A549 (cell line): ENCODE measurements at regions of chr15 and their contacts with region 1.

Region 1: DNA sequence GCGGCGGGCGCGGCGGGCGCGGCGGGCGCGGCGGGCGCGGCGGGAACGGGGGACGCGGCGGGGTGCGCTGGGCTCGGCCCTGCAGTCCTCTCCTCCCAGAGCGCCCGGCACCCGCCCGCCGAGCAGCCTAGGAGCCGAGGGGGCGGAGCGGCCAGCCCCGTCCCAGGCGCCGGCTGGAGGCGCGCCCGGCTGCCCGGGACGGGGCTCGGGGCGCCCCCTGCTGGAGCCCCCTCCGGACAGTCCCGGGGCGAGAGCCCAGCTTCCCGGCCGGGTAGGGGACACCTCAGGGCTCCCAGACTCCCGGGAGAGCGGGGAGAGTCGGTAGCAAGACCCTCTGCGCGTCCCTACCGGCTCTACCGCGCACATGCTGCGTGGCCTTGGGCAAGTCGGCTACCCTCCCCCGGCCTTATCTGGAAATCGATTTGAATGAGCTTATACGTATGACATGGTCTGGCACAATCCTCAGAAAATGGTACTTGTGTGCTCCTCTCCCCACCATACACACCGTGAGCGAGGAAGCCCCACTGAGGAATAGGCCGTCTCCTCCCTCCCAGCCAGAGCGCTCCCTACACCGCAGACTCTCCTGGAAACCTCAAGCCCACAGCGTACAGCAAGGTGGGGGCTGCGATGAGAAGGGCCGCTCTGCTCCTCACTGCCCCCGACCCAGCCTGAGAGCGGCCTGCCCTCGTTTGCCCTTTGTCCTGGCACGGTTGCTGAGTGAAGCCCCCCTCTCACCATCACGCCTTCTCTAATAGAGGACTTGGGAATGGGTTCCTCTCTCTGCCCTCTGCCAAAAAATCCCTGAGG is at the start of gene DAPK2:
- DNase-seq: peak; percentile 66 to 98
- ATAC-seq: peak; percentile 83 to 91
- H3K4me3 ChIP-seq: peak within 1 kb of the TSS; percentile 64
- H3K27ac ChIP-seq: peak within 1 kb of the TSS; percentile 73 to 94
- H3K4me1 ChIP-seq: peaks cover 33% of the 10 kb centered on the region
- CTCF ChIP-seq: peak; percentile 99
- EP300 ChIP-seq: no peak
- POLR2A ChIP-seq: peak; percentile 37; the same call in 1 of the 2 replicates
- RAD21 ChIP-seq: peak; percentile 63 to 95
- polyA plus RNA-seq, gene DAPK2: 4.2 and 4.8 TPM in 2 replicates

Region 2: GRCh38 chr15:63610200-63610841 is 436.2 kb before region 1 on chr15:
- CTCF ChIA-PET with region 1: interaction called, 29 read pairs
- POLR2A ChIA-PET with region 1: no interaction called
- DNase-seq: peak; percentile 85 to 93
- ATAC-seq: peak; percentile 92 to 96
- H3K4me3 ChIP-seq: no peak overlapping the region
- H3K27ac ChIP-seq: peak overlapping the region; percentile 18 to 21; a peak in 3 of 6 replicates
- H3K4me1 ChIP-seq: peaks cover 17% of the 10 kb centered on the region
- CTCF ChIP-seq: peak; percentile 96
- EP300 ChIP-seq: no peak
- POLR2A ChIP-seq: no peak
- RAD21 ChIP-seq: peak; percentile 94 to 95

Region 3: DNA sequence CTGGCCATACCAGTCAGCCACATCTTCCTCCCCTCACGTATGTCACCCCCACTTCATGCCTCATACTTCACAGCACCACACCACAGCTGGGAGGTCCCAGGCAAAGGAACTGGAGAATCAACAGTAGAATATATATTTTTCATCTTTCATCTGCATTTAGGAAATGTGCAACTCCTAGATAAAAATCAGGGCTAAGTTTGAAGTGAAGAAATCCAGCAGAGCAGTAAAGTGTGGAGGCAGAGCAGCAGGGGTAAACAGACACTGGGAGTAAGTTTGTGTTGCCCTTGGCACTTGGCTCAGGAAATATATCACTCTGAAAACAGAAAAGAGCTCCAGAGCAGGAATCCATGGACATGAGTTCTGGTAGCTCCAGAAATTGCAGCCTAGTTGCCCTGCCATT is 210.0 kb before region 1 on chr15:
- CTCF ChIA-PET with region 1: interaction called, 10 read pairs
- POLR2A ChIA-PET with region 1: no interaction called
- DNase-seq: no peak
- ATAC-seq: no peak
- H3K4me3 ChIP-seq: no peak overlapping the region
- H3K27ac ChIP-seq: no peak overlapping the region
- H3K4me1 ChIP-seq: peaks cover 14% of the 10 kb centered on the region; the same call in 1 of the 3 replicates
- CTCF ChIP-seq: no peak
- EP300 ChIP-seq: no peak
- POLR2A ChIP-seq: no peak
- RAD21 ChIP-seq: no peak

Region 4: DNA sequence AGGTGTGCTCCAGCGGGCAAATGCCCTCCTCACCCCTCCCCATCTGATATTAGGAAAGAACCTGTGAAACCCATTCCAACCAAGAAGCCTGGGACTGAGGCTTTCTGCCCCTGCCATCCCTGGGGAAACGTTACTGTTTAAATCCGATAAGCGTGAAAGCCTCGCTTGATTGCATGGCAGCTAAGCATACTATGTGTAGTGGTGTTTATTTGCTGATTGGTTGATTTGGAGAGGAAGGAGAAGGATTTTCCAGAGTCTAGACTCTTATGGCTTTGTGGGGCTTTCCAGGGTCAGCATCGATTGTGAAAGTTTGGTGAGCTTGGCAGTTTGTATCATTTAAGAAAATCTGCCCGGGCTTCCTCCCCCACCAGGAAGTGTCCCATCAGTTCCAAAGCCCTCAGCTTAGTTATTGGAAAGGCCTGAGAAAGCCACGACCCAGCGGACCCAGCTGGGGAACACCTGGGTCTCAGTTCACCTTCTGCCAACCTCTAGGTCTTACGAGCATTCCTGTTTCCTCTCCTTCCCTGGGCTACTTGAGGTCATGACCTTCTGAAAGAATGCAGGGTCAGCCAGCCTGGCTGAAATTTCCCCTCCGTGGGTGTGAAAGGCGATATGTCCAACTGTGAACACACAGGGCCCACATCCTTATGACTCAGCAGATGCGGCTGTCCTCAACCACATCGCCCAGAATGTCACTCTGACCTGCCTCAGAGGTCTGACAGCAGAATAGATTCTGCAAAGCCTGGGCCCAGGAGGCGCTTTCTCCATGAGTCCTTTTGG is 150.0 kb before region 1 on chr15:
- CTCF ChIA-PET with region 1: interaction called, 13 read pairs
- POLR2A ChIA-PET with region 1: no interaction called
- DNase-seq: peak; percentile 50 to 66
- ATAC-seq: peak; percentile 19 to 69; a peak in 3 of 6 replicates
- H3K4me3 ChIP-seq: no peak overlapping the region
- H3K27ac ChIP-seq: peak overlapping the region; percentile 51 to 74
- H3K4me1 ChIP-seq: peaks cover 14% of the 10 kb centered on the region
- CTCF ChIP-seq: no peak
- EP300 ChIP-seq: no peak
- POLR2A ChIP-seq: no peak
- RAD21 ChIP-seq: no peak

Region 5: GRCh38 chr15:63945007-63945788 is 101.4 kb before region 1 on chr15:
- CTCF ChIA-PET with region 1: interaction called, 146 read pairs
- POLR2A ChIA-PET with region 1: interaction called, 5 read pairs
- DNase-seq: peak; percentile 64 to 90
- ATAC-seq: peak; percentile 89 to 97
- H3K4me3 ChIP-seq: no peak overlapping the region
- H3K27ac ChIP-seq: peak overlapping the region in 1 of 2 experiments; percentile 12; a peak in 1 of 6 replicates
- H3K4me1 ChIP-seq: no peaks in the 10 kb centered on the region
- CTCF ChIP-seq: peak; percentile 86
- EP300 ChIP-seq: no peak
- POLR2A ChIP-seq: no peak
- RAD21 ChIP-seq: peak; percentile 62 to 76

Region 6: GRCh38 chr15:64010719-64011118 is 35.8 kb before region 1 on chr15:
- CTCF ChIA-PET with region 1: interaction called, 26 read pairs
- POLR2A ChIA-PET with region 1: interaction called, 8 read pairs
- DNase-seq: peak in 1 of 2 experiments; percentile 49
- ATAC-seq: peak; percentile 52 to 67; a peak in 4 of 6 replicates
- H3K4me3 ChIP-seq: no peak overlapping the region
- H3K27ac ChIP-seq: no peak overlapping the region
- H3K4me1 ChIP-seq: peaks cover 25% of the 10 kb centered on the region; the same call in 2 of the 3 replicates
- CTCF ChIP-seq: no peak
- EP300 ChIP-seq: no peak
- POLR2A ChIP-seq: no peak
- RAD21 ChIP-seq: no peak

Region 7: GRCh38 chr15:64067564-64068030 is 21.0 kb after region 1 on chr15:
- CTCF ChIA-PET with region 1: interaction called, 173 read pairs
- POLR2A ChIA-PET with region 1: no interaction called
- DNase-seq: peak; percentile 61 to 80
- ATAC-seq: peak; percentile 77 to 88
- H3K4me3 ChIP-seq: no peak overlapping the region
- H3K27ac ChIP-seq: peak overlapping the region in 1 of 2 experiments; percentile 44; a peak in 2 of 6 replicates
- H3K4me1 ChIP-seq: peaks cover 24% of the 10 kb centered on the region
- CTCF ChIP-seq: peak; percentile 93
- EP300 ChIP-seq: no peak
- POLR2A ChIP-seq: no peak
- RAD21 ChIP-seq: peak; percentile 97 to 98